ENCODE measurements at regions of chr7 and their contacts with region 1.

Region 1: DNA sequence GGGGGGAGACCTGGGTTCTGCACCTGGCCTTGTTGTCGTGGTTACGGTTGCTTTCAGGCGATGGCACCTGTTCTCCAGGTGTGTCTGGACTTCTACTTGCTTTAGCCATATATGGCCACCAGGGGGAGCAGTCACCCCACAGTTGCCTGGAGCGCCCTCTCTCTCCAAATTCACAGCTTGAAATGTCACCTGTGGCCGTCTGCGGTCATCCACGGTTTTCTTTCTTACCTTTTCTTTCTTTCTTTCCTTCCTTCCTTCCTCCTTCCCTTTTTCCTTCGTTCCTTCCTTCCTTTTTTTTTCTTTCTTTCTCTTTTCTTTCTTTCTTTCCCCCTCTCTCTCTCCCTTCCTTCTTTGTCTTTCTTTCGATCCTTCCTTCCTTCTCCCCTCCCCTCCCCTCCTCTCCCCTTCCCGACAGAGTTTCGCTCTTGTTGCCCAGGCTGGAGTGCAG is 150.5 kb upstream of the VKORC1L1 start:
- DNase-seq: peak; percentile 39
- ATAC-seq: peak; percentile 60
- H3K4me3 Mint-ChIP-seq: no peak overlapping the region
- H3K27ac Mint-ChIP-seq: no peak overlapping the region
- H3K4me1 Mint-ChIP-seq: peaks cover 8% of the 10 kb centered on the region
- H3K27me3 Mint-ChIP-seq: no peaks in the 10 kb centered on the region
- CTCF ChIP-seq: peak; percentile 60

Region 2: DNA sequence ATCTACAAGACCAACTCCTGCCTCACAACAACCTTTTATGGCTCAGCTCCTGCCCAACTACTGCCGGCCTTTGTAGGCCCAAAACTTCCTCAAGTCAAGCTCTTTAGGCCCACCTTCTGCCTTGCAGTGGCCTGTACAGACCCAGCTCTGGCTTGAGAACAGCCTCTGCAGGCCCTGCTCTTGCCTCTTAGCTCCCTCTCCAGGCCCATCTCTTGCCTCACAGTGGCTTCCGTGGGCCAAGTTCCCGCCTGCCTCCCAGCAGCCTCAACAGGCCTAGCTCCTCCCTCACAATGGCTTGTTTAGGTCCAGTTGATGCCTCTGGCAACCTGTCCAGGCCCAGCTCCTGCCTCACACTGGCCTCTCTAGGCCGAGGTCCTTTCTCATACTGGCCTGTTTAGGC is 118.1 kb after region 1 on chr7:
- CTCF ChIA-PET with region 1: interaction called, 3 read pairs
- POLR2A ChIA-PET with region 1: no interaction called
- intact Hi-C with region 1: loop called (anchors 1 kb)
- DNase-seq: no peak
- ATAC-seq: peak; percentile 52
- H3K4me3 Mint-ChIP-seq: no peak overlapping the region
- H3K27ac Mint-ChIP-seq: no peak overlapping the region
- H3K4me1 Mint-ChIP-seq: no peaks in the 10 kb centered on the region
- H3K27me3 Mint-ChIP-seq: no peaks in the 10 kb centered on the region
- CTCF ChIP-seq: no peak

Region 3: GRCh38 chr7:66413379-66414114 is 691.2 kb after region 1 on chr7:
- CTCF ChIA-PET with region 1: no interaction called
- POLR2A ChIA-PET with region 1: no interaction called
- intact Hi-C with region 1: loop called (anchors 5 kb)
- DNase-seq: peak; percentile 67
- ATAC-seq: peak; percentile 78
- H3K4me3 Mint-ChIP-seq: peak overlapping the region; percentile 80
- H3K27ac Mint-ChIP-seq: peak overlapping the region; percentile 41
- H3K4me1 Mint-ChIP-seq: peaks cover 13% of the 10 kb centered on the region
- H3K27me3 Mint-ChIP-seq: no peaks in the 10 kb centered on the region
- CTCF ChIP-seq: no peak